ENCODE measurements at regions of chr2 and their contacts with region 1.

Region 1: DNA sequence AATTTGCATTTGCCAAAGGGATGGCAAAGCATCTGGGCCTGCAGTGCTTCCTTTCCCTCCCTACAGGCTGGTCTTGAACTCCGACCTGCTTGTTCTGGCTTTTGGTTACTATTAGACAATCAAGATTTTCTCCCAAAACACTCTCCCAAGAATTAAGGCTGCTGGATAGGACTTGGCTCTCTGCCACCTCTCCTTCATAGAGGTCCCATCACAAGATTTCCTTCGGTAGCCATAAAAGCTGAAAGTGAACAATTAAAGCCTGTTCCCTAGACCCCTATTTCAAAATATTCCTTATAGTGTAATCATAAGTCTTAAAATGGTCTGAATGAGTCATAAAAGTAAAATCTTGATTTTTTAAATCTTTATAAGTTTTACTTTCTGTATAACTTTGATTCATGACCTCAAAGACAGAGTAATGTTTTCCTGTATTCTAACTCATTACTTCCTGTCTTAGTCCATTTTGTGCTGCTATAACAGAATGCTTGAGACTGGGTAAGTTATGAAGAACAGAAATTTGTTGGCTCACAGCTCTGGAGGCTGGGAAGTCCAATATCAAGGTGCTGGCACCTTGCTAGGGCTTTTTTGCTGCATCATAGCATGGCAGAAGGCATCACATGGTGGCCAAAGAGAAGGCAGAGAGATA is 37.8 kb upstream of the TNP1 start:
- DNase-seq: no peak
- ATAC-seq: no peak
- H3K4me3 ChIP-seq: no peak overlapping the region
- H3K4me3 Mint-ChIP-seq: peak overlapping the region in 1 of 10 donors; percentile 36
- H3K27ac ChIP-seq: no peak overlapping the region
- H3K27ac Mint-ChIP-seq: peak overlapping the region in 3 of 9 donors; percentile 38 to 79 (median 55)
- H3K4me1 ChIP-seq: no peaks in the 10 kb centered on the region
- H3K4me1 Mint-ChIP-seq: peaks cover 0 to 10% (median 0%) of the 10 kb centered on the region in 7 donors
- H3K27me3 ChIP-seq: no peaks in the 10 kb centered on the region
- H3K27me3 Mint-ChIP-seq: peaks cover 0 to 8% (median 3%) of the 10 kb centered on the region in 5 donors

Region 2: GRCh38 chr2:217843324-217843723 is 945.6 kb after region 1 on chr2:
- CTCF ChIA-PET with region 1: no interaction called
- POLR2A ChIA-PET with region 1: no interaction called
- intact Hi-C with region 1: loop called in 1 of 2 experiments (anchors 5 kb)
- DNase-seq: no peak
- ATAC-seq: no peak
- H3K4me3 ChIP-seq: no peak overlapping the region
- H3K4me3 Mint-ChIP-seq: no peak overlapping the region
- H3K27ac ChIP-seq: no peak overlapping the region
- H3K27ac Mint-ChIP-seq: no peak overlapping the region
- H3K4me1 ChIP-seq: no peaks in the 10 kb centered on the region
- H3K4me1 Mint-ChIP-seq: no peaks in the 10 kb centered on the region
- H3K27me3 ChIP-seq: no peaks in the 10 kb centered on the region
- H3K27me3 Mint-ChIP-seq: peaks cover 0 to 6% (median 0%) of the 10 kb centered on the region in 5 donors